Heart right ventricle (tissue), 16 donors: ENCODE measurements at regions of chrX and their contacts with region 1.

Region 1: DNA sequence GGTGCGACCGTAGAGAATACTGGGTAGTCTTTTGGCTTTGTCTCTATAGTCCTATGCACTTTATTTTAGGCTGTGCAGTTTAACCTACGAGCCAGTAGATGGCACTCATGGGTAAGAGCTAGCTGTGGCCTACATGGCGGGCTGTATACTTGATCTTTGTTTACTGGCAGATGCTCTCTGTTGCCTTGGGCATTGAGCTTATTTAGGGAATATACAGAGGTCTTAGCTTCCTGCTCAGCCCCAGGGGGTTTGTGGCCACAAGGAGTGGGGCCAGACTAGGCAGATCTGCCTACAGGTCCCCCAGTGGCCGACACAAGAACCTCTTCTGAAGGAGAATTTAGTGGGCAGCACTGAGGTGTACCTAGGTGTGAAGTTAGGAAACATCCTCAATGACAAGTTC is 227.6 kb upstream of the HDX start:
- DNase-seq: no peak
- ATAC-seq: peak in 7 of 8 donors; percentile 53 to 76 (median 70)
- H3K4me3 ChIP-seq: no peak overlapping the region
- H3K27ac ChIP-seq: no peak overlapping the region
- H3K4me1 ChIP-seq: no peaks in the 10 kb centered on the region
- H3K27me3 ChIP-seq: peaks cover 0 to 10% (median 0%) of the 10 kb centered on the region in 7 donors
- CTCF ChIP-seq: peak; percentile 21 to 75 (median 67)

Region 2: DNA sequence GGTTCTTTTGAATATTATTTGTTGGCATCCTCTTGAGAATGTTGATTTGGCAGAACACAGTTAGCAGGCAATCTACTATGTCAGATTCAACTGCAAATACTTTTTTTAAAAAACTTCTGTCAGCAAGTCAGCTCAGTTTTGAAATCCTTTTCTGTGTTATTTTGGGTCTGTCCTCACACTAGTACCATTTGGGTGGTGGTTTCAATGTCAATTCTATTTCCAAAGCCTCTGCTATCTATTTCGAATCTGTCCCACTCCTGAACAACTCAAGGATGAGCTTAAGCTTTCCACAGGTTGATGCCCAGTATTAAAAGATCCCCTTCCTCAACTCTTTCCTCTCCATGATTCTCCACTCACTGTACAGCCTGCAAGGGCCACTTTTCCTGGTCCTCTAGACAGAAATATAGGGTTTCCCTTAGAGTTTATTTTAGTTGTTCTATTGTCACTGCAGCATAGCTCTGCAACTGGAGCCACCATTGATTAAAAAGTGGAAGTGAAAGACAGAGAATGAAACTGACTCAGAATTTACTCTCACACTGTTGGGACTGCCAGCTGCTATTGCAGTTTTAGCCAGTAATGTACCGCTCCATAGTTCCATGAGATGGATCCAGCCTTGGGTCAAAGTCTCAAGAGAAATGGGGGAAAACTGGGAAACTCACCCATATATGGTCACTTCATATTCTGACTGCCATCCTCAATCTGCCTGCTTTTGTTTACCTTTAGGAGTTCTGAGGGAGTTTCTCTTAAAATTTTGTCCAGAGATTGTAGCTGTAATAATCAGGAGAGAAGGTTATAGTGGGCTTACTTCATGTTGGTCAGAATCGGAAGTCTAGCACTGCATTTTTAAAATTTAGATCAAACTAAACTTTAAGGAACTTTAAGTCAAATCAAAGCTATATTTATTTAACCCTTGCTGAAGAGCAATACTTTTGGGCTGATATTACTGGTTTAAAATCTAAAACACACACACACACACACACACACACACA is 242.2 kb before region 1 on chrX:
- intact Hi-C with region 1: no loop called
- DNase-seq: no peak
- ATAC-seq: no peak
- H3K4me3 ChIP-seq: no peak overlapping the region
- H3K27ac ChIP-seq: no peak overlapping the region
- H3K4me1 ChIP-seq: no peaks in the 10 kb centered on the region
- H3K27me3 ChIP-seq: no peaks in the 10 kb centered on the region
- CTCF ChIP-seq: no peak

Region 3: GRCh38 chrX:84907324-84907968 is 177.6 kb after region 1 on chrX:
- intact Hi-C with region 1: loop called in 9 of 10 experiments (anchors 2 to 10 kb)
- DNase-seq: no peak
- ATAC-seq: no peak
- H3K4me3 ChIP-seq: no peak overlapping the region
- H3K27ac ChIP-seq: no peak overlapping the region
- H3K4me1 ChIP-seq: no peaks in the 10 kb centered on the region
- H3K27me3 ChIP-seq: peaks cover 0 to 9% (median 0%) of the 10 kb centered on the region in 7 donors
- CTCF ChIP-seq: peak in 8 of 9 donors; percentile 9 to 51 (median 29)

Region 4: GRCh38 chrX:84956304-84956703 is 226.5 kb after region 1 on chrX:
- intact Hi-C with region 1: no loop called
- DNase-seq: no peak
- ATAC-seq: no peak
- H3K4me3 ChIP-seq: no peak overlapping the region
- H3K27ac ChIP-seq: no peak overlapping the region
- H3K4me1 ChIP-seq: no peaks in the 10 kb centered on the region
- H3K27me3 ChIP-seq: no peaks in the 10 kb centered on the region
- CTCF ChIP-seq: no peak

Region 5: DNA sequence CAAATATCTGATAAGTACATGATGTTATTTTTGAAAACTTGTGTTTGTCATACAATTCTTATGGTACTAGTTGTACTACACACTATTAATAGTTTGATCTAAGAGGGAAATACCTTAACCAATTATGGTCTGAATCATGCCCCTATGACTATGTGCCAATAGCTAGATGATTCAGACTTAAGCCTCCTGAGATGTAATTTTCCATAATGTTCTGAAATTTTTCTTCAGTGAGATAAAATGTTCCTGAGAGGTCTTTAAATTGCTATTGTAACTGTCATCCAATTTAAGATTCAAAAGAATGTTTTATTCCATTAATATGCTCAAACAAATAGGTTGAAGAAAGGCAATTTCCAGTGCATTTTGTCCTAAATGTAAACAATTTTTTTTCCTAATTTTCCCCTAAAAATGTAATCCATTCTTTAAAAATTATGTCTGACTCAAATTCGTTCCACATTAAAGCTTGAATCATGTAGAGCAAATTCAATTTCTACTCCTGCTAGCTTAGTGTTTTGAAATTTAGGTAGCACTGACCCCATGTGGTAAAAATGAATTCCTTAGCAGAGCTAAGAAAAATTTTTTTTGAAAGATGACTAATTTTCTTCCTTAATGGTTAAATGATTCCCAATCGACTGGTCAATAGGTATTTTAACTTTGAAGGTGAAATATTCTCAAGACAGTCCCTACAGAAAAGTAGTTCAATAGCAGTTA is 323.0 kb after region 1 on chrX:
- intact Hi-C with region 1: loop called in 6 of 10 experiments (anchors 5 to 10 kb)
- DNase-seq: no peak
- ATAC-seq: peak in 1 of 8 donors; percentile 45
- H3K4me3 ChIP-seq: no peak overlapping the region
- H3K27ac ChIP-seq: no peak overlapping the region
- H3K4me1 ChIP-seq: no peaks in the 10 kb centered on the region
- H3K27me3 ChIP-seq: peaks cover 0 to 7% (median 0%) of the 10 kb centered on the region in 7 donors
- CTCF ChIP-seq: peak in 6 of 9 donors; percentile 24 to 47 (median 34)

Region 6: GRCh38 chrX:85084770-85085393 is 355.1 kb after region 1 on chrX:
- intact Hi-C with region 1: no loop called
- DNase-seq: no peak
- ATAC-seq: no peak
- H3K4me3 ChIP-seq: no peak overlapping the region
- H3K27ac ChIP-seq: no peak overlapping the region
- H3K4me1 ChIP-seq: peaks cover 0 to 6% (median 0%) of the 10 kb centered on the region in 9 donors
- H3K27me3 ChIP-seq: no peaks in the 10 kb centered on the region
- CTCF ChIP-seq: peak; percentile 41 to 88 (median 66)